Activated T-helper 1 cell treated with anti-CD3 and anti-CD28 coated beads, Interleukin-12 subunit alpha, Interleukin-12 subunit beta, Interleukin-2, Interleukin-4 antibody, amounts not matched to agents 30 ng/mL and 10 ng/mL and 1 ng/mL, durations not matched to agents 14 hours and 24 hours and 36 hours (primary cell): ENCODE measurements at regions of chr3 and their contacts with region 1.

Region 1: GRCh38 chr3:42581709-42582473 is at the start of gene SEC22C:
- DNase-seq: peak; percentile 93
- H3K4me3 Mint-ChIP-seq: peak within 1 kb of the TSS; percentile 90
- H3K27ac Mint-ChIP-seq: peak within 1 kb of the TSS; percentile 93
- H3K4me1 Mint-ChIP-seq: peaks cover 61% of the 10 kb centered on the region
- H3K27me3 Mint-ChIP-seq: peaks cover 1% of the 10 kb centered on the region
- total RNA-seq, gene SEC22C: 37.5 and 38.3 TPM in 2 replicates

Region 2: GRCh38 chr3:42159706-42160472 is 422.0 kb before region 1 on chr3:
- intact Hi-C with region 1: no loop called
- DNase-seq: peak; percentile 12
- H3K4me3 Mint-ChIP-seq: peak overlapping the region; percentile 55
- H3K27ac Mint-ChIP-seq: peak overlapping the region; percentile 55
- H3K4me1 Mint-ChIP-seq: peaks cover 31% of the 10 kb centered on the region
- H3K27me3 Mint-ChIP-seq: no peaks in the 10 kb centered on the region

Region 3: GRCh38 chr3:42502429-42503250 is 79.3 kb before region 1 on chr3 and contains the start of gene VIPR1:
- intact Hi-C with region 1: loop called (anchors 2 kb)
- DNase-seq: peak; percentile 85
- H3K4me3 Mint-ChIP-seq: peak within 1 kb of the TSS; percentile 86
- H3K27ac Mint-ChIP-seq: no peak within 1 kb of the TSS
- H3K4me1 Mint-ChIP-seq: peaks cover 31% of the 10 kb centered on the region
- H3K27me3 Mint-ChIP-seq: peaks cover 26% of the 10 kb centered on the region
- total RNA-seq, gene VIPR1: 0.69 and 0.88 TPM in 2 replicates

Region 4: GRCh38 chr3:42556089-42556632 is 25.7 kb before region 1 on chr3:
- intact Hi-C with region 1: loop called (anchors 1 kb)
- DNase-seq: peak; percentile 52
- H3K4me3 Mint-ChIP-seq: peak overlapping the region; percentile 52
- H3K27ac Mint-ChIP-seq: peak overlapping the region; percentile 94
- H3K4me1 Mint-ChIP-seq: peaks cover 41% of the 10 kb centered on the region
- H3K27me3 Mint-ChIP-seq: no peaks in the 10 kb centered on the region

Region 5: DNA sequence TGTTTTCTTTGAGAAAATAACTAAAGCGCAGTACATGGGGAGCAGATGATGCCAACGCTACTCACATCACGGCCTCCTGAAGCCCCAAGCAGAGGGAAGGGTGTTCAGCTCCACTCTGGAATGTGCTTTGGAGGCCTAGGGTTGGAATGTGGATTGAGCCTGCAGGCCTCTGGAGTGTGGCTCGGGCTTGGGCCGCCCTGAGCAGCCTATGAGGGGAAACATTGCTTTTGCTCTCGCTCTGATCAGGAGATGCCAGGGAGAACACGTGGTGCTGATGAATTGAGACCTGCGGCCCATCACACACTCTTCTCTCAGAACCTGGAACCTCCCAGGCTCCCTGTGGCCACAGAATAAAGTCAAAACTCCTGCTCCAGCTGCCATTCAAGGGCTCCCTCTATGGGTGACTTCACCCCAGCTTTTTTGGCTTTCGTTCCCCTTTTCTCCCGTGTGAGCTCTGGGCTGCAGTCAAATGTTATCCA is 167.9 kb after region 1 on chr3:
- intact Hi-C with region 1: loop called (anchors 2 kb)
- DNase-seq: no peak
- H3K4me3 Mint-ChIP-seq: no peak overlapping the region
- H3K27ac Mint-ChIP-seq: no peak overlapping the region
- H3K4me1 Mint-ChIP-seq: peaks cover 20% of the 10 kb centered on the region
- H3K27me3 Mint-ChIP-seq: peaks cover 5% of the 10 kb centered on the region

Region 6: GRCh38 chr3:42772670-42773408 is 190.9 kb after region 1 on chr3 and contains the start of gene CCDC13:
- intact Hi-C with region 1: loop called (anchors 1 kb)
- DNase-seq: peak; percentile 86
- H3K4me3 Mint-ChIP-seq: peak within 1 kb of the TSS; percentile 85
- H3K27ac Mint-ChIP-seq: peak within 1 kb of the TSS; percentile 85
- H3K4me1 Mint-ChIP-seq: peaks cover 12% of the 10 kb centered on the region
- H3K27me3 Mint-ChIP-seq: peaks cover 9% of the 10 kb centered on the region
- total RNA-seq, gene CCDC13: 0.32 TPM in 1 of 2 replicates, not detected in the other

Region 7: GRCh38 chr3:42804106-42804830 is 222.4 kb after region 1 on chr3 and contains the start of gene HIGD1A:
- intact Hi-C with region 1: loop called (anchors 1 kb)
- DNase-seq: peak; percentile 92
- H3K4me3 Mint-ChIP-seq: peak within 1 kb of the TSS; percentile 99
- H3K27ac Mint-ChIP-seq: peak within 1 kb of the TSS; percentile 90
- H3K4me1 Mint-ChIP-seq: peaks cover 43% of the 10 kb centered on the region
- H3K27me3 Mint-ChIP-seq: peaks cover 27% of the 10 kb centered on the region
- total RNA-seq, gene HIGD1A: 90.1 and 97.5 TPM in 2 replicates